ENCODE measurements at regions of chr3 and their contacts with region 1.

Region 1: DNA sequence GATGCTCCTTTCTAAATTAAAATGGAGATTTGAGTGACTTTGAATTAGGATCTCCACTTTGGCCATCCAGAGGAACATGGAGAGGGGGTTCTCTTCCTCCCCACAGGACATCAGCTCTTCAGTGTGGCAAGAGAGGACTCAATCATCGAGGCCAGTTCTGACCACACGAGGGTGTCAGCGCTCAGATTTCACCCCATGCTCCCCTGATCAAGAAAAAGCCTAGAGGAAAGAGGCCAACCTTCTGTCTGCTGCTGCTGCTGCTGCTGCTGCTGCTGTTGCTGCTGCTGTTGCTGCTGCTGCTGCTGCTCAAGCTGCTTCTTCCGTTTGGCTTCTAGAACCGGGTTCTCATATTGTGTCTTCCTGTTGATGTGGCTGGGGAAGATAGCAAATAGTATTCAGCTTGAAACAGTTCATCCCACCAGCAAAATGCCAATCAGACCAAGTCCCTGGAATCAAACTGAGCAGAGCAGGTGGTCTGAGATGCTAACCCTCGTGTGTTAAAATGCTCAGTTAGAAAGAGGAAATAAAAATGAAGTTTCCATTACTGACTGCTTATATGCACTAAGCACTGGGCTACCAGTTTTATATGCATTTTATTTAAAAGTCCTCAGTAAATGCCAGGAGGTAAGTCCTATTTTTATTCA is 599.0 kb downstream of the MAGI1 start:
- DNase-seq: peak; percentile 35
- H3K4me3 ChIP-seq: no peak overlapping the region
- H3K27ac ChIP-seq: no peak overlapping the region
- H3K4me1 ChIP-seq: no peaks in the 10 kb centered on the region
- H3K27me3 ChIP-seq: no peaks in the 10 kb centered on the region
- CTCF ChIP-seq: peak; percentile 37 to 50 (median 47)
- EP300 ChIP-seq: no peak
- POLR2A ChIP-seq: no peak

Region 2: GRCh38 chr3:65672871-65673815 is 233.4 kb after region 1 on chr3:
- in situ Hi-C with region 1: no loop called
- intact Hi-C with region 1: loop called (anchors 2 kb)
- DNase-seq: peak; percentile 40
- H3K4me3 ChIP-seq: no peak overlapping the region
- H3K27ac ChIP-seq: no peak overlapping the region
- H3K4me1 ChIP-seq: no peaks in the 10 kb centered on the region
- H3K27me3 ChIP-seq: no peaks in the 10 kb centered on the region
- CTCF ChIP-seq: peak; percentile 56 to 77 (median 68)
- EP300 ChIP-seq: no peak
- POLR2A ChIP-seq: no peak

Region 3: DNA sequence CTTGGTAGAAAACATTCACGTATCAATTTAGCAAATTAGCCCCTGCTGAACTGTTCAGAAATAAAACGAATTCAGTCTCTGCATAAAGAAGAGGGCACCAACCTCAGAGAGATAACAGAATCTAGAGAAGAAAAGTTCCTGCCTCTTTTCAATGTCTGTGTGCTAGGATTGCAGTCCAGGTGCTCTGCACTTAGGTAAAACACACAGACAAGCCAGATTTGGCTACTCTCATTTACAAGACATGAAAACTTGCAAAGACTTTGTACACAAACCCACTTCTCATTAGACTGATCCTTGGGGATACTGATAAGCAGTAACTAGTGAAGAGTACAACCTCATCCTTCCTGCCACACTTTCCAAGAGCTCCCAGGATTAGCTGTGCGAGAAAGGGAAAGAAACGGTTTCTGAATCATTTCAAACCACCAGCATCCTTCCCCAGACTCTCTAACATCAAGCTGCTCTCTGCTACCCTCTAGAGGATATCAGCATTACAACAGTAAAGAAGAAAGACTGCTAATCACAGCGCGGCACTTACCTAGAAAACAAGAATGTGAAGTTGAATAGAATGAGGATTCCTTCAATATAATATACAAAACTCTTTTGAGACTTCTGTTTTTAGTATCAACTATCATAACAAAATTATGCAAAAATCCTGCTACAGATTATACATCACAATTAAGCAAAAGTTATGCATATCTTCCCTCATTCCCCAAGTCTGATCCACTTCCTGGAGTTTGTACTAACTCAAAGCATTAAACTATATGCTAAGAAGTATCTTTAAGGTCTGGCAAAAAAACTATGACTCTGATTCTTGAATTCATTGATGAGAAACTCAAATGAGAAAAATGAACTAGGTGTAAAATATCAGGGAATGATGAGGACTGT is 292.5 kb after region 1 on chr3:
- in situ Hi-C with region 1: loop called in 2 of 4 experiments (anchors 25 kb)
- intact Hi-C with region 1: no loop called
- DNase-seq: no peak
- H3K4me3 ChIP-seq: no peak overlapping the region
- H3K27ac ChIP-seq: no peak overlapping the region
- H3K4me1 ChIP-seq: peaks cover 0 to 24% (median 11%) of the 10 kb centered on the region in 4 donors
- H3K27me3 ChIP-seq: no peaks in the 10 kb centered on the region
- CTCF ChIP-seq: peak; percentile 40 to 77 (median 68)
- EP300 ChIP-seq: no peak
- POLR2A ChIP-seq: no peak